Activated CD4-positive, alpha-beta memory T cell treated with anti-CD3 and anti-CD28 coated beads, Interleukin-2, amount 10 ng/mL, durations not matched to agents 7 days and 5 days (primary cell): ENCODE measurements at regions of chr7 and their contacts with region 1.

Region 1: DNA sequence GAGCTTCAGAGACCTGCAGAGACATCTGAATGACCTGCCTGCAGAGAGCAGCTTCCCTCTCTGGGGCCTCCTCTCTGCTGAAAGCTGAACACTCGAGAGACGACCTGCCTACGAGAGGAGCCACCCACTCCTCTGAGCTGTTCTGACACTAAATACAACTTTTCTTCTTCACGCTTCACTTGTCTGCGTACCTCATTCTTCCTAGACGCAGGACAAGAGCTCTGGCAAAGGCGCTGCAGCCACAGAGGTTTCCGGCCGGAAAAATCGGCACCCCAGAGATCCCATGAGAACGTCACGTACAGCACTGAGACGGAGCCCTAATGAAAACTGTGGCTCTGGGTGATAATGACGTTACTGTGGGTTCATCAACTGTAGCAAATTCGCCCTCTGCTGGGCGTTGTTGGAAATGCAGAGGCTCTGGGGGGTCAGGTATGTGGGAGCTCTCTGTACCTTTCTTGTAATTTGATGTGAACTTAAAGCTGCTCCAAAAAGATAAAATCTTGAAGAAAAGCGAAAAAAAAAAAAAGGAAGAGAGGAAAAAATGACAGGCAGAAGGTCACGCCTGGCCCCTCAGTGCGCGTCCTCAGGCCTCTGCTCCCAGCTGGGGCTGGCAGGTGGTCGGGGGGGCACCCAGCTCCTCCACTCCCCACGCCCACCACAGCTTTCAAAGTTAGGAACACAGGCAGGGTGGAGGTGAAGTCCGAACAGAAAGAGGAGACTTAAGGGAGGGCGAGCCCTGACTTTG is 120.7 kb downstream of the DYNC2I1 start:
- DNase-seq: peak; percentile 90
- H3K4me3 Mint-ChIP-seq: peak overlapping the region; percentile 77
- H3K27ac Mint-ChIP-seq: peak overlapping the region; percentile 78
- H3K4me1 Mint-ChIP-seq: peaks cover 20% of the 10 kb centered on the region
- H3K27me3 Mint-ChIP-seq: no peaks in the 10 kb centered on the region

Region 2: DNA sequence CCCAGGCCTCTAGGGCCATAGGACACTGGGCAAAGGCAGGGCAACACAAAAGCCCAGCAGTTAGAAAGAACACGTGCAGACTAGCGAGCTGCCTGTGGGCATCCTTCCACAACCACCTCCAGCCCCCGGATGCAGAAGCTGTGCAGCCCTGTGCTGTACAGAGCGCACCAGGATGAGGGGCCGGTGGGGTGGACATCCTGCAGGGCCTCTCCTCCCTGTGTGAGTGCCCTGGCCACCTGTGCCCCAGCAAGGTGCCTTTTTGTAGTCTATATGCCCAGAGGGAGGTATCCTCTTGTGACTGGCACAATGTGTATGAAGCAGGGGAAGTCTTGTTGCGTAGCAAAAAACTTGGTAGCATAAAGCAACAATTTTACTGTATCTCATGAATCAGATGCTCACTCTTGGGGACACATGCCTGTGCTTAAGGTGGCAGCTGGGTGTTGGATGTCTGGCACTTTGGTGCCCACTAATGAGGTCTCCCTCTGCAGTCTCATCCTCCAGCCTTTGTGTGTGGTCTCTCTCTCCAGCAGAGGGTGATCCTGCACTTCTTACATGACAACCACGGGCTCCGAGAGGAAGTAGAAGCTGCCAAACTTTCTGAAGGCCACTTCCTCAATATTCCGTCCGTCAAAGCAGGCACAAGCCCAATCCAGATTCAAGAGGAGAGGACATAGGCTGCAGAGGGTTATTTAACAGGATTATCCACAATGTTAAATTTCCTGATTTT is 281.1 kb before region 1 on chr7:
- CTCF ChIA-PET with region 1: interaction called, 14 read pairs
- POLR2A ChIA-PET with region 1: interaction called, 4 read pairs
- DNase-seq: peak; percentile 48
- H3K4me3 Mint-ChIP-seq: no peak overlapping the region
- H3K27ac Mint-ChIP-seq: peak overlapping the region; percentile 44
- H3K4me1 Mint-ChIP-seq: peaks cover 59% of the 10 kb centered on the region
- H3K27me3 Mint-ChIP-seq: no peaks in the 10 kb centered on the region

Region 3: GRCh38 chr7:158863611-158864506 is 113.2 kb before region 1 on chr7:
- CTCF ChIA-PET with region 1: interaction called, 10 read pairs
- POLR2A ChIA-PET with region 1: no interaction called
- DNase-seq: peak; percentile 60
- H3K4me3 Mint-ChIP-seq: peak overlapping the region; percentile 76
- H3K27ac Mint-ChIP-seq: peak overlapping the region; percentile 81
- H3K4me1 Mint-ChIP-seq: peaks cover 49% of the 10 kb centered on the region
- H3K27me3 Mint-ChIP-seq: no peaks in the 10 kb centered on the region

Region 4: DNA sequence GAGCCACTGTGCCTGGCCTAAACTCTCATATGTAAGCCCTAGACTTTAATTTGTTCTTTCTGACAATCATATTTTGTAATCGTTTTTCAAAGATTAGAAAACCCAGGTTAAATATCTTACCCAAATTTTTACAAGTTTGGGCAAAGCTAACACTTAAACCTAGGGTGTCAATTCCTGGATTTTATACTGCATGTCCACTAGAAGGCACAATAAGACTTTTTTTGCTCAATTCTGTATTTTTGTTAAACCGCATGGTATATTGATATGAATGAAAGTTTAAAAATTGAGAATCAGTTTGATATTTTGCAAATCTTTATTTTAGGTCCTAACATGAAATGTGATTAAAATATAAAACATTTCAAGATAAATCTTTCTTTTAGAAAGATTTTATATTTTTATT is 91.4 kb before region 1 on chr7:
- CTCF ChIA-PET with region 1: interaction called, 20 read pairs
- POLR2A ChIA-PET with region 1: no interaction called
- DNase-seq: no peak
- H3K4me3 Mint-ChIP-seq: no peak overlapping the region
- H3K27ac Mint-ChIP-seq: no peak overlapping the region
- H3K4me1 Mint-ChIP-seq: no peaks in the 10 kb centered on the region
- H3K27me3 Mint-ChIP-seq: no peaks in the 10 kb centered on the region

Region 5: DNA sequence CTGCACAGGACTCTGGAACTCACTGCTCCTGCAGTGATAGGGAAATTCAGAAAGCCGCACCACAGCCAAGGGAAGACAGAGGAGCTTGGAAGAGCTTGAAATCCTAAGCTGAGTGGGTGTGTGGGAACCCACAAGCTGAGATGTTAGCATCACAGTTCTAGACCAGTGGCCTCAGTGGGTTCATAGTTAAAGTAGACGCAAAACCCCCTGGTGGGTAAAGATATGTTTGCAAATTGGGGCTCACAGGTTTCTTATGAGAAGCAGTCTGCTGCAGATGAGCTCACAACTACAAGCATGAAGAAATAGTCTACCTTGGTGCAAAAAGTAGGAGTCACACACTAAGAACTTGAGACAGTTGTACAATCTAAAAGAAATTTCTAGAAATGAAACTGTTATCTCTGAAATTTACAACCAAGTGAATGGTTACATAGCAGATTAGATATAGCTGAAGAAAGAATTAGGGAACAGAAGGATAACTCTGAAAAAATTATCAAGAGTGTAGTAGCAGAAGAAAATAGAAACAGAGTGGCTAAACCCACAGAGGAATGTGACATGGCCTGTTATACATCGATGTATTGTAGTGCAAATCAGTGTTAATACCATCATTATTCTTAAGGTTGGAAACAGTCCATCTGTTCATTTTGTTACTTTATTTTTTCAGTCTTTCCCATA is 43.4 kb before region 1 on chr7:
- CTCF ChIA-PET with region 1: interaction called, 10 read pairs
- POLR2A ChIA-PET with region 1: no interaction called
- DNase-seq: no peak
- H3K4me3 Mint-ChIP-seq: no peak overlapping the region
- H3K27ac Mint-ChIP-seq: no peak overlapping the region
- H3K4me1 Mint-ChIP-seq: no peaks in the 10 kb centered on the region
- H3K27me3 Mint-ChIP-seq: no peaks in the 10 kb centered on the region

Region 6: GRCh38 chr7:158958618-158959356 is 18.2 kb before region 1 on chr7:
- CTCF ChIA-PET with region 1: interaction called, 11 read pairs
- POLR2A ChIA-PET with region 1: no interaction called
- DNase-seq: no peak
- H3K4me3 Mint-ChIP-seq: peak overlapping the region; percentile 62
- H3K27ac Mint-ChIP-seq: no peak overlapping the region
- H3K4me1 Mint-ChIP-seq: peaks cover 12% of the 10 kb centered on the region
- H3K27me3 Mint-ChIP-seq: peaks cover 19% of the 10 kb centered on the region

Region 7: DNA sequence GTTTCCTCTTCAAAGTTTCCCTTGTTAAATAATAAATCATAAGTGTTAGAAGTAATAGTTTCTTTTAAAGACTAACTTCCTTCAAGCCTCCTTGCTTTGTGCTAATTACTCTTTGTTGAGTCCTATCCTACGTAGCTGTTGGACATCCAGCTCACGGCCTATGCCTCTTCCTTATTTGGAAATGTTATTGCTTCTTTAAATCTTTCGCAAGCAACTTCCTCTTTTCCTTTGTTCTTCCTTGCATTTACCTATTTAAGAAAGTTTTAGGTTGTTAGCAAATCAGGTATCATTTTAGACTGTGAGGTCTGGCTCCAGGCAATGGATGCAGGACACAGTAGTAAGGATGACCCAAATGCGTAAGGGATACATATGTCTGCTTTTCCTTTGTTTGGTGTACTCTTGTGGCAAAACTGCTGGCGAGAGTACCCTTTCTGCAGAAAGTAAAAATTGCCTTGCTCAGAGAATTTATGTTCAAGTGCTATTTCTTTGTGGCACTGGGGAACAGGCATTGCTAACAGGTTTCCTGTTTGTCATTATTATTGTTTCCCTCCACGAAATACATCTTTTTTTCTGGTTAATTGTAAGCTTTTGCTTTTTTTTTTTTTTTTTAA is 10.1 kb before region 1 on chr7:
- CTCF ChIA-PET with region 1: interaction called, 15 read pairs
- POLR2A ChIA-PET with region 1: no interaction called
- DNase-seq: no peak
- H3K4me3 Mint-ChIP-seq: no peak overlapping the region
- H3K27ac Mint-ChIP-seq: no peak overlapping the region
- H3K4me1 Mint-ChIP-seq: no peaks in the 10 kb centered on the region
- H3K27me3 Mint-ChIP-seq: peaks cover 2% of the 10 kb centered on the region